Testis (tissue), 5 donors: ENCODE measurements at regions of chr22 and their contacts with region 1.

Region 1: DNA sequence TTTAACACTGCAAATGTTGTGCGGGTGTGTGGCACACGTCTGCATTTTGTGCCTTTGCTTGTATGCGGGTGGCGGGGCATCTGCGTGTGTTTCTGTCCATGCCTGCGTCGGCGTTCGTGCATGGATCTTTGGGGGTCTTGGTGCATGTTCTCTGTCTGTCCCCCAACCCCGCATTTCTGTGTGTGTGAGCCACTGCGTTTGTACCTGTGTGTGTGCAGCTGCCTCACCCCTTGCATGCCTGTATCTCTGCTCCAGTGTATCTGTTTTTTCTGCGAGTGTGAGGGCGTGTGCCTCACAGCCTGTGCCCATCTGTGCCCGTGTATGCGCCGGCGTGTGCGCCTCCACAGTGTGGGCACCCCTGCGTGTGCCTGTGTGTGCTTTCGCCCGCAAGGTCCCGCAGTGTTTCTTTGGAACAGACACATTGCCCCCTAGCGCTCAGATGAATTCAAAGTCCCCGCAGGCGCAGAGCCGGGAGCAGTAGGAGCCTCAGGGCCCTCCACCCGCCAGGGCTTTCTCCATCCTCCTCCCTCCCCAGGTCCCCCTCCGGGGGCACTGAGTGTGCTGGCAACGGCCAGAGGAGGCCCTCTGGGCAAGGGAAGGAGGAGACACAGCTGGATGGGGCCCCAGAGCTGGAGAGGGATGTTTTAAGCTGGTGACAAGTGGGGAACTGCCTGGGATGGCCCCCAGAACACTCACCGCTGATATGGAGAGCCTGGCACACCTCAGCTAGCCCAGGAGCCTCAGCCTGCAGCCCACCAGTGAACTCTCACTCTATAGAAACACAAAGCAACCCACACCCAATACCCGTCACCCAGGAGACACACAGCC is 3.1 kb upstream of the MN1 start:
- DNase-seq: peak; percentile 83
- H3K4me3 ChIP-seq: no peak overlapping the region
- H3K27ac ChIP-seq: no peak overlapping the region
- H3K4me1 ChIP-seq: peaks cover 9% of the 10 kb centered on the region
- H3K27me3 ChIP-seq: no peaks in the 10 kb centered on the region
- CTCF ChIP-seq: peak; percentile 54 to 64 (median 63)
- POLR2A ChIP-seq: no peak

Region 2: DNA sequence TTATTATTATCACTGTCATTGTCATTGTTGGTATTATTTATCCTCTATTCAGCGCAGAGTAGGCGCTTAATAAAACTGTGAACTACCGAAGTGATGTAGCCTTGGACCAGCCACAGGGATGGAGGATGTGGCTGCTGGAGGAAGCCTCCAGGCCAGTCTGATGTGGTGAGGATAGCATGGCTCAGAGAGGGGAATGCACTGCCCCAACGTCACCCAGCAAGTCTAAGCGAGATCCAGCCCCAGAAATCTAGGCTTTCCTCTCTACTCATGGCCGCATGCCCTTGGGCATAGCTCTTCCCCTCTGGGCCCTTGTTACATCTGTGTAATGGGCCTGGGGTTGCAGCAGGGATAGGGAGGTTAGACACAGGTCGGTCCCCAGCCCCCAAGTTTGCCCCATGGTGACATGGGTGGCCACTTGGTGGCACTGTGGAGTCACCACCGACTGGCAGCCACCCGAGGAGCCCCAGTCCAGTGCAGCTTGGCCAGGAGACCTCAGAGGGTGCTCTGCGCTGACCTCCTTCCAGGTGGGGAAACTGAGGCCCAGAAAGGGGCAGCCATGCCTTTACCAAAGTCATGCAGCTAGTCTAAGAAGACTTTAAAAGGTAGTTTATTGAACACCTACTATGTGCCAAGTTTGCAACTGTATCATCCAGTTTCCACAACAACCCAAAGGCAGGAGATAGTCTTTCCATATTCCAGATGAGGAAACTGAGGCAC is 398.9 kb before region 1 on chr22:
- intact Hi-C with region 1: loop called (anchors 10 kb)
- DNase-seq: peak; percentile 72
- H3K4me3 ChIP-seq: no peak overlapping the region
- H3K27ac ChIP-seq: no peak overlapping the region
- H3K4me1 ChIP-seq: no peaks in the 10 kb centered on the region
- H3K27me3 ChIP-seq: no peaks in the 10 kb centered on the region
- CTCF ChIP-seq: peak; percentile 57 to 67 (median 65)
- POLR2A ChIP-seq: no peak

Region 3: GRCh38 chr22:27987557-27987956 is 182.9 kb after region 1 on chr22:
- intact Hi-C with region 1: no loop called
- DNase-seq: peak; percentile 12
- H3K4me3 ChIP-seq: no peak overlapping the region
- H3K27ac ChIP-seq: no peak overlapping the region
- H3K4me1 ChIP-seq: peaks cover 11% of the 10 kb centered on the region
- H3K27me3 ChIP-seq: no peaks in the 10 kb centered on the region
- CTCF ChIP-seq: no peak
- POLR2A ChIP-seq: no peak